RWPE1 (cell line): ENCODE measurements at regions of chr11 and their contacts with region 1.

Region 1: GRCh38 chr11:66311965-66312548 is 4.8 kb downstream of the CD248 start:
- DNase-seq: peak; percentile 89
- H3K27ac ChIP-seq: peak overlapping the region; percentile 93
- CTCF ChIP-seq: peak; percentile 58

Region 2: GRCh38 chr11:66326261-66327111 is 14.4 kb after region 1 on chr11:
- CTCF ChIA-PET with region 1: interaction called, 25 read pairs
- POLR2A ChIA-PET with region 1: no interaction called
- DNase-seq: no peak
- H3K27ac ChIP-seq: peak overlapping the region; percentile 100
- CTCF ChIP-seq: no peak

Region 3: GRCh38 chr11:66336234-66337102 is 24.4 kb after region 1 on chr11 and contains the start of gene RIN1:
- CTCF ChIA-PET with region 1: interaction called, 22 read pairs
- POLR2A ChIA-PET with region 1: no interaction called
- DNase-seq: peak; percentile 97
- H3K27ac ChIP-seq: peak within 1 kb of the TSS; percentile 100
- CTCF ChIP-seq: peak; percentile 50

Region 4: GRCh38 chr11:66386171-66387069 is 74.4 kb after region 1 on chr11:
- CTCF ChIA-PET with region 1: interaction called, 24 read pairs
- POLR2A ChIA-PET with region 1: interaction called, 5 read pairs
- DNase-seq: peak; percentile 49
- H3K27ac ChIP-seq: no peak overlapping the region
- CTCF ChIP-seq: peak; percentile 91

Region 5: DNA sequence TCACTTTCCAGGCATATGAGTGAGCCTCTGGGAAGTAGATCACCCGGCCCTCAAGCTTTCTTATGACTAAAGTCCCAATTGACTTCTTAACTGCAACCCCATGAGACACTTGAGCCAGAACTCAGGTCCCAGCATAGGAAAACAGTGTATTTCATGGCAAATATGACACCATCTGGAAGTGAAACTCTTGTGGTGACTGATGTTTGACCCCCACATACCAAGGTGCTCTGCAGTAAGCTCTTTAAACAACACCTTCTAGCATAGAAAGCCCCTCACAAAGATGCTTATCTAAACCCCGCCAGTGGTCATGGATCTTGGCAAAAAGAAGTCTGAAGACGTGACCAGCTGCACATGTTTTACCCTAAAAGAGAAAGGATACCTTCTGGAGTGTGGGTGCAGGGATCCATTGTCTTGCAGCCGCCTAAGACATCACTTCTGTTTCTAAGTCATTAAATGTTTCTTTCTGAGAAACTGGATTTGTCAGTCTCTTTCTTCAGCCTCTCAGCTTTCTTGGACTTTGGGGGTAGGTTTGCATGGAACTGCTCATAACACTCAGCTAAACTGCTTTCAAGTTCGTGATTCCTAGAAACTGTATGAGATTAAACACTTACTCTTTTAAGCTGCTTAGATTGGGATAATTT is 147.2 kb after region 1 on chr11:
- CTCF ChIA-PET with region 1: no interaction called
- POLR2A ChIA-PET with region 1: no interaction called
- DNase-seq: no peak
- H3K27ac ChIP-seq: no peak overlapping the region
- CTCF ChIP-seq: no peak

Region 6: GRCh38 chr11:66480117-66480938 is 168.3 kb after region 1 on chr11 and contains the start of gene DPP3:
- CTCF ChIA-PET with region 1: no interaction called
- POLR2A ChIA-PET with region 1: no interaction called
- DNase-seq: peak; percentile 99
- H3K27ac ChIP-seq: peak within 1 kb of the TSS; percentile 93
- CTCF ChIP-seq: no peak